HepG2 (cell line): ENCODE measurements at regions of chr12 and their contacts with region 1.

Region 1: DNA sequence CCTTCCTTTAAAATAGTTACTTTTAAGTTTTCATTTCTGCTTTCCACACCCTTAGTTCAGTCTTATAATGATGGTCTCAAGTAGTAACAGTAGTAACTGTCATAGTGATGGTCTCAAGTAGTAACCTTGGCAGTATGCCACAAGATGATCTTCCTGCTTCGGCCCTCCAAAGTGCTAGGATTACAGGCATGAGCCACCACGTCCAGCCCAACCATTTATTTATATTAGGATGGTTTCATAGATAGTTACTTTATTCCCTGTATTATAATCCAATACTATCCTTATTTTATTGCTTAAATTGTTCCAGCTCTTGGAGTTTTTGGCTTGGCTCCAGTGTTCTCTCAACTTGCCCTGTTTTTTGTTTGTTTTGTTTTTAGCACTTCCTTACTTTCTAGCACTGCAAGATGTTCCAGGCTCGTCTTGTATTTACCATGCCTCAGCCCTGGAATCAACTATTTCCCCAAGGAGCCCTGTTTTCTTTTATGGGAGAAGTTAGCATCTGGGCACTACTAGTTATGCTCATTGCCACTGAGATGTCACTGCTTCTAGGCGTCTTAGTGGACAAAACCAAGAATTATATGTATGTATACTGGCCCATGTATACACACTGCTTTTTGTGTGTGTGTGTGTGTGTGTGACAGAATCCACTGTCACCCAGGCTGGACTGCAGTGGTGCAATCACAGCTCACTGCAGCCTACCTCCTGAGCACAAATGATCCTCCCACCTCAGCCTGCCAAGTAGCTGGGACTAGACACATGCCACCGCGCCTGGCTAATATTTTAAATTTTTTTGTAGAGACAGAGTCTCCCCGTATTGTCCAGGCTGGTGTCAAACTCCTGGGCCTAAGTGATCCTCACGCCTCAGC is 25.4 kb downstream of the LIMA1 start:
- DNase-seq: no peak
- ATAC-seq: peak; percentile 32; the same call in 2 of the 3 replicates
- H3K4me3 ChIP-seq: no peak overlapping the region
- H3K27ac ChIP-seq: peak overlapping the region; percentile 40
- H3K4me1 ChIP-seq: peaks cover 86% of the 10 kb centered on the region
- H3K27me3 ChIP-seq: no peaks in the 10 kb centered on the region
- CTCF ChIP-seq: no peak
- EP300 ChIP-seq: no peak
- POLR2A ChIP-seq: no peak
- RAD21 ChIP-seq: no peak

Region 2: DNA sequence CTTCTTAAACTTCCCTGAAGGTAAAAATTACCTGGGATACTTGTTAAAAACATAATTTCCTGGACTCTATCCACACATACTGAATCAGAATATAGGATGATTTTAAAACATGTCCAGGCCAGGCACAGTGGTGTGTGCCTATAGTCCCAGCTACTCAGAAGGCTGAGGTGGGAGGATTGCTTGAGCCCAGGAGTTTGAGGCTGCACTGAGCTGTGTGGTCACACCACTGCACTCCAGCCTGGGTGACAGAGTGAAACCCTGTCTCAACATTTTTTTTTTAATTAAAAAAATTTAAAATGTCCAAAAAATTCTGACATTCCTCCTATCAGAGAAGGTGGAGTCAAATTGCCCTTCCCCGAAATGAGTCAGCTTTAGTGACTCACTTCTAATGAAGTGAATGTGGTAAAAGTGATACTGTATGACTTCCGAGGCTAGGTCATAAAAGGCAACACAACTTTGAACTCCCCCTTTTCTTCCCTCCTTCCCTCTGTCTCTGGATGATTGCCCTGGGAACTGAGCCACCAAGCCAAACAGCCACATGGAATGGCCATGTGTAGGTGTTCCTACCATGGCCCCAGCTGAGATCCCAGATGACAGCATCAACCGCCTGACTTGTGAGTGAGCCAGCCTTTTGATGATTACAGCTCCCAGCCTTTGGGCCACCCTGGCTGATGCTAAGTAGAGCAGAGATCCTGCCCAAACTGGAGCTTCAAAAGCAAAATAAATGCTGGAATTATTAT is 10.9 kb before region 1 on chr12:
- CTCF ChIA-PET with region 1: no interaction called
- POLR2A ChIA-PET with region 1: interaction called, 34 read pairs
- in situ Hi-C with region 1: no loop called
- intact Hi-C with region 1: no loop called
- DNase-seq: peak; percentile 59
- ATAC-seq: no peak
- H3K4me3 ChIP-seq: no peak overlapping the region
- H3K27ac ChIP-seq: peak overlapping the region; percentile 46
- H3K4me1 ChIP-seq: peaks cover 66% of the 10 kb centered on the region
- H3K27me3 ChIP-seq: no peaks in the 10 kb centered on the region
- CTCF ChIP-seq: no peak
- EP300 ChIP-seq: no peak
- POLR2A ChIP-seq: no peak
- RAD21 ChIP-seq: no peak

Region 3: GRCh38 chr12:50275556-50275955 is 17.6 kb after region 1 on chr12:
- CTCF ChIA-PET with region 1: no interaction called
- POLR2A ChIA-PET with region 1: interaction called, 32 read pairs
- in situ Hi-C with region 1: no loop called
- intact Hi-C with region 1: loop called (anchors 1 kb)
- DNase-seq: no peak
- ATAC-seq: no peak
- H3K4me3 ChIP-seq: no peak overlapping the region
- H3K27ac ChIP-seq: no peak overlapping the region
- H3K4me1 ChIP-seq: peaks cover 69% of the 10 kb centered on the region
- H3K27me3 ChIP-seq: no peaks in the 10 kb centered on the region
- CTCF ChIP-seq: no peak
- EP300 ChIP-seq: no peak
- POLR2A ChIP-seq: no peak
- RAD21 ChIP-seq: no peak

Region 4: DNA sequence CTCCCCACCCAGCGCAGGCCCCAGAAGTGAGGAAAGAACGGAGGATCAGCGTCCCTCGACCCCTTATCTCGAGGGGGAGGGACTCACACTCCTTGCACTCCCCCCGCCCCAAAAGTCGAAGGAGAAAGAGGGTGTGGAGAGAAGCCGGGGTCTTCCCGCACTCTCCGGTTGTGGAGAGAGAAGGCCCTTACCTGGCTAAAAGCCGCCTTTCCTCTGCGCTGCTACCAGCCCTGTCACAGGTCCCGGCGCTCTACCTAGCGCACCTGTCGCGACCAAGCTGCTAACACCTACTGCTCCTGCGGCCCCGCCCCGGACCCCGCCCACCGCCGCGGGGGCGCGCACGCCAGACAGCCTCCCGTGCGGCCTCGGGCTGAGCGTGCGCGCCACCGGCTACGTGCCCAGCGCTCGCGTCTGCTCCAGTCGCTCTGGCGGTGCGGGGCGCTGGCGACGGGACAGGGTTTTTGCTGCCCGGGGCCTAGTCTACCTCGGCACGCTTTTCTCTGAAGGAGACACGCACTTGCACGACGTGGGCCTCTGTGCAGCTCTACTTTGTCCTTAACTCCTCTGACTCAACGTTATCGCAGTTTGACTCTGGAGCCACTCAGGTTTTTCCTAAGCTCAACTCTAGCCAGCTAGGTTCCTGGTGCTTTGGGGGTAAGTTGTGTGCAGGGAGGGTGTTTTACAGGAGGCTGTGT is 25.5 kb after region 1 on chr12 and contains the start of gene LIMA1:
- CTCF ChIA-PET with region 1: no interaction called
- POLR2A ChIA-PET with region 1: interaction called, 21 read pairs
- in situ Hi-C with region 1: no loop called
- intact Hi-C with region 1: no loop called
- DNase-seq: peak; percentile 76
- ATAC-seq: peak; percentile 96
- H3K4me3 ChIP-seq: peak within 1 kb of the TSS; percentile 83 to 94 (median 92)
- H3K27ac ChIP-seq: peak within 1 kb of the TSS; percentile 80
- H3K4me1 ChIP-seq: peaks cover 48% of the 10 kb centered on the region
- H3K27me3 ChIP-seq: no peaks in the 10 kb centered on the region; a peak in 1 of 5 replicates
- CTCF ChIP-seq: peak; percentile 14; the same call in 1 of the 2 replicates
- EP300 ChIP-seq: no peak
- POLR2A ChIP-seq: peak; percentile 88 to 95
- RAD21 ChIP-seq: peak; percentile 58
- total RNA-seq, gene LIMA1: 13.0 and 19.3 TPM in 2 replicates

Region 5: GRCh38 chr12:50297027-50297426 is 39.1 kb after region 1 on chr12:
- CTCF ChIA-PET with region 1: no interaction called
- POLR2A ChIA-PET with region 1: no interaction called
- in situ Hi-C with region 1: no loop called
- intact Hi-C with region 1: no loop called
- DNase-seq: no peak
- ATAC-seq: no peak
- H3K4me3 ChIP-seq: no peak overlapping the region
- H3K27ac ChIP-seq: no peak overlapping the region
- H3K4me1 ChIP-seq: no peaks in the 10 kb centered on the region
- H3K27me3 ChIP-seq: no peaks in the 10 kb centered on the region
- CTCF ChIP-seq: no peak
- EP300 ChIP-seq: no peak
- POLR2A ChIP-seq: no peak
- RAD21 ChIP-seq: no peak

Region 6: GRCh38 chr12:50442178-50442908 is 184.4 kb after region 1 on chr12:
- CTCF ChIA-PET with region 1: no interaction called
- POLR2A ChIA-PET with region 1: no interaction called
- in situ Hi-C with region 1: no loop called
- intact Hi-C with region 1: no loop called
- DNase-seq: no peak
- ATAC-seq: no peak
- H3K4me3 ChIP-seq: no peak overlapping the region
- H3K27ac ChIP-seq: no peak overlapping the region
- H3K4me1 ChIP-seq: no peaks in the 10 kb centered on the region
- H3K27me3 ChIP-seq: no peaks in the 10 kb centered on the region
- CTCF ChIP-seq: no peak
- EP300 ChIP-seq: no peak
- POLR2A ChIP-seq: no peak
- RAD21 ChIP-seq: no peak